Heart left ventricle (tissue), 16 donors: ENCODE measurements at regions of chr2 and their contacts with region 1.

Region 1: GRCh38 chr2:55168221-55169154 is 63.6 kb downstream of the CLHC1 start:
- DNase-seq: peak in 3 of 5 donors; percentile 42 to 43 (median 42)
- ATAC-seq: peak; percentile 40 to 80 (median 74)
- H3K4me3 ChIP-seq: no peak overlapping the region
- H3K27ac ChIP-seq: peak overlapping the region in 5 of 12 donors; percentile 7 to 62 (median 9)
- H3K4me1 ChIP-seq: peaks cover 0 to 32% (median 9%) of the 10 kb centered on the region in 12 donors
- H3K27me3 ChIP-seq: no peaks in the 10 kb centered on the region
- CTCF ChIP-seq: peak; percentile 48 to 85 (median 73)
- POLR2A ChIP-seq: no peak

Region 2: GRCh38 chr2:54723131-54723995 is 445.1 kb before region 1 on chr2 and contains the start of gene EML6:
- intact Hi-C with region 1: loop called in 3 of 10 experiments (anchors 5 to 10 kb)
- DNase-seq: peak; percentile 98 to 99 (median 98)
- ATAC-seq: peak; percentile 100
- H3K4me3 ChIP-seq: peak within 1 kb of the TSS; percentile 45 to 89 (median 73)
- H3K27ac ChIP-seq: peak within 1 kb of the TSS in 11 of 12 donors; percentile 32 to 82 (median 76)
- H3K4me1 ChIP-seq: peaks cover 0 to 26% (median 9%) of the 10 kb centered on the region in 12 donors
- H3K27me3 ChIP-seq: peaks cover 0 to 18% (median 0%) of the 10 kb centered on the region in 9 donors
- CTCF ChIP-seq: peak in 7 of 12 donors; percentile 7 to 48 (median 24)
- POLR2A ChIP-seq: peak in 1 of 2 donors; percentile 82
- total RNA-seq, gene EML6: 0.08 to 1.2 (median 0.58) TPM

Region 3: DNA sequence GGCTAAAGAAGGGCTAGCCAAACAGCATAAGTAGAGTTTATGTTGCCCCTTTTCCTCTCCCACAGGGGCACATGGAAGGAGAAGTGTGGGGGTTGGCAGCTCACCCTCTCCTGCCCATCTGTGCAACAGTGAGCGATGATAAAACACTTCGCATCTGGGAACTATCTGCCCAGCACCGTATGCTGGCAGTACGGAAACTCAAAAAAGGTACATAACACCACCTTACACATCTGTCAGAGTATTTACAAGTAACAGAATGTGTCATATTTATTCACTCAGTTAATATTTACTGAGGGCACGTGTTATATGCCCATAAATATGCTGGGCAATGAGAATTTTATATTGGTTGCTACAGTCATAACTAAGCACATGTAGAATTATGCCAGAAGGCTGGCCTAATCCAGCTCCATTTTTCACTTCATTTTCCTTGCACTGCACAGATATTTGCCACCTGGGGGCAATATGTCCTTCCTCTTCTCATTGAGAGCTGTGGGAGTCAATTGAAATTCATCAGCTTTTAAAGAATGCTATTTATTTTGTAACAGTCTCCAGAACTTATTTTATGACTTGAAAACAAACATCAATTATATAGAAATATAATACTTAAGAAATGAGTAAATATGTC is 268.8 kb before region 1 on chr2:
- intact Hi-C with region 1: loop called in 7 of 10 experiments (anchors 5 to 10 kb)
- DNase-seq: no peak
- ATAC-seq: peak in 3 of 4 donors; percentile 47 to 78 (median 58)
- H3K4me3 ChIP-seq: no peak overlapping the region
- H3K27ac ChIP-seq: no peak overlapping the region
- H3K4me1 ChIP-seq: peaks cover 0 to 12% (median 0%) of the 10 kb centered on the region in 12 donors
- H3K27me3 ChIP-seq: no peaks in the 10 kb centered on the region
- CTCF ChIP-seq: peak; percentile 22 to 72 (median 60)
- POLR2A ChIP-seq: no peak

Region 4: DNA sequence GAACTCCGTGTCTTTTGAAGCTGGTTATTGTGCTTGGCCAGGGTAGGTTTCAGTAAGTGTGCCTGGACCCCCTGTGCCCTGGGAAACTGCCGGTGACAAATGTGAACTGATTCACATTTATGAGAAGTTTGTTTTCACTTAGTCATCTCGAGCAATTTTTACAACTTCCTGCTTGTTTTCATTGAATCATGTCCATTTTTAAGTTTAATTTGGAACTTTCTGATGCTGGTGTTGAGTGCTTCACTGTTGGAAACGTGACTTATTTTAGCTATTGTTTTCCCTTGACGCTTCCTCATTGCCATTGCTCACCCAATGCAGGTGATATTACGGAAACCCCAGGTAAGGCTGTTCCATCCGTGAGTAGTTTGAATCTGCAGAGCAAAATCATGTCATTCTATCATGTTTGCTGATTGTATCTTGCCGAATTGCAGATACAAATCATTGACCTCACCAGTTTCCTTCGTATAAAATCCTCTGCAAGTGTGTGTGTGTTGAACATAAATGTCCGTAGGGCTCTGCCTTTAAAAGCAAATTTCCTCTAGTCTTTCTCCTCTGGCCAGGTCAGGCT is 215.4 kb before region 1 on chr2:
- intact Hi-C with region 1: no loop called
- DNase-seq: no peak
- ATAC-seq: no peak
- H3K4me3 ChIP-seq: no peak overlapping the region
- H3K27ac ChIP-seq: no peak overlapping the region
- H3K4me1 ChIP-seq: no peaks in the 10 kb centered on the region
- H3K27me3 ChIP-seq: peaks cover 0 to 6% (median 0%) of the 10 kb centered on the region in 9 donors
- CTCF ChIP-seq: no peak
- POLR2A ChIP-seq: no peak

Region 5: DNA sequence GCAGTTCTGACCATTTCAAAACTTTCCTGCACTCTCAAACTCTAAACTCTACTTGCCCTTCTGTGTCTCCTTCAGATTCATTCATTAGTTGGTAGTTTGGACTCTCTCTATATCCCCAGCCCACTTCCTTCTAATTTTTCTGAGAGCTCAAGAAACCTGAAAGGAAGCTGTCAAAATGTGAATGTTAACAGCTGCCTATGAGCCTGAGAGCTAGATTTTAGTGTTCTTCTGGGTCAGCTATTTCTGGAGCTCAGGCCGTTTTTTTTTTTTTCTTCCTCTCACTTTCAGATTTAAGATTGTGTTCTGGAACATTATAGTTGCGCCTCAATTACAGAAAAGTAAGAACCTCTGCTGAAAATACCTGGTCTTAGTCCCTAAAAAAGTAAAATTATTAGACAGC is 191.3 kb before region 1 on chr2:
- intact Hi-C with region 1: no loop called
- DNase-seq: no peak
- ATAC-seq: peak in 3 of 4 donors; percentile 26 to 53 (median 42)
- H3K4me3 ChIP-seq: no peak overlapping the region
- H3K27ac ChIP-seq: peak overlapping the region in 5 of 12 donors; percentile 8 to 53 (median 35)
- H3K4me1 ChIP-seq: peaks cover 0 to 68% (median 47%) of the 10 kb centered on the region in 12 donors
- H3K27me3 ChIP-seq: no peaks in the 10 kb centered on the region
- CTCF ChIP-seq: no peak
- POLR2A ChIP-seq: no peak

Region 6: DNA sequence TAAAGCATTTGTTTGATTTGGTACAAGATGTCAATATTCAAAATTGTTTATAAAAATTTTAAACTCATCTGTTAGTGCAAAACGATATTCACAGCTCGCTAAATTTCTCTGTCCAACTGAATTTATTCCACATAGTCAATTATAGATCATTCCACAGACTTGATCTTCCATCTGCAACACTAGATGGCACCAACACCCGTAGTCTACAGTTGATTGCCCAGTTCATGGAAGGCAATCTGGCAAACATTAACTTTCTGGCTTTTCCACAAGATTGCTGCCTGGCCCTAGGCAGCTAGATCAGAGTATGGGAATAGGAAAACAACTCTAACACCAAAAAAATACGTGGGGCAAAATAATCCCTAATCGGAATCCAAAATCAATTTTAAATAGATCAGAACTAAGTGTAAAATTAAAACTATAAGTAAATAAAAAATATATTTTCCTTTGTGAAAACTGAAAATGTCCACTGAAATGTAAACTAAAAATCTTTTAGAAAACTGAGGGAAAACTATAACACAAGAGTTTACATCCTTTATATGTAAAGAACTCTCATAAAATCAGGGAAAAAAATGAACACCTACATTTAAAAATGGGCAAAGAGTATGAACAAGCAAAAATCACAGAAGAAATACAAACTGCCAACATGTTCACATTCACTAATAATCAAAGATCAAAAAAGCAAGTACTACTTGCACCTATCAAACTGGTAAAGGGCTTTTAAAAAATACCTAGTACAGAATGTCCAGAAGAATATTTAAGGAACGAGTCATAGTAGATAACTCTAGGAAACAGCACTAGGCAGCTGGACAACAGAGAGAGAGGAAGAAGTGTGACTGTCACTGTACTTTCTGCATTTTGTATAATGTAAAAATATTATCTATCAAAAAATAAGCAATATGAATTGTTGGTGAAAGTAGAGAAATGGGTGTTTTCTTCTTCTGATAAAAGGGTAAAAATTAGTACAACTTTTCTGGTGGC is 153.2 kb before region 1 on chr2:
- intact Hi-C with region 1: loop called in 8 of 10 experiments (anchors 2 kb)
- DNase-seq: peak in 3 of 5 donors; percentile 29 to 45 (median 40)
- ATAC-seq: peak; percentile 59 to 86 (median 81)
- H3K4me3 ChIP-seq: no peak overlapping the region
- H3K27ac ChIP-seq: no peak overlapping the region
- H3K4me1 ChIP-seq: peaks cover 0 to 86% (median 42%) of the 10 kb centered on the region in 12 donors
- H3K27me3 ChIP-seq: no peaks in the 10 kb centered on the region
- CTCF ChIP-seq: peak; percentile 44 to 77 (median 64)
- POLR2A ChIP-seq: no peak

Region 7: GRCh38 chr2:55056024-55056521 is 112.4 kb before region 1 on chr2:
- intact Hi-C with region 1: loop called in 3 of 10 experiments (anchors 5 to 10 kb)
- DNase-seq: no peak
- ATAC-seq: no peak
- H3K4me3 ChIP-seq: no peak overlapping the region
- H3K27ac ChIP-seq: no peak overlapping the region
- H3K4me1 ChIP-seq: peaks cover 0 to 17% (median 13%) of the 10 kb centered on the region in 12 donors
- H3K27me3 ChIP-seq: no peaks in the 10 kb centered on the region
- CTCF ChIP-seq: no peak
- POLR2A ChIP-seq: no peak

Region 8: GRCh38 chr2:55088400-55088799 is 80.1 kb before region 1 on chr2:
- intact Hi-C with region 1: loop called in 1 of 10 experiments (anchors 10 kb)
- DNase-seq: no peak
- ATAC-seq: no peak
- H3K4me3 ChIP-seq: no peak overlapping the region
- H3K27ac ChIP-seq: peak overlapping the region in 3 of 12 donors; percentile 50 to 73 (median 61)
- H3K4me1 ChIP-seq: peaks cover 0 to 21% (median 3%) of the 10 kb centered on the region in 12 donors
- H3K27me3 ChIP-seq: no peaks in the 10 kb centered on the region
- CTCF ChIP-seq: no peak
- POLR2A ChIP-seq: no peak